ENCODE measurements at regions of chr17 and their contacts with region 1.

Region 1: GRCh38 chr17:80030730-80031410 is 4.8 kb downstream of the TBC1D16 start:
- DNase-seq: peak; percentile 80
- H3K4me3 Mint-ChIP-seq: no peak overlapping the region
- H3K27ac Mint-ChIP-seq: no peak overlapping the region
- H3K4me1 Mint-ChIP-seq: peaks cover 48% of the 10 kb centered on the region
- H3K27me3 Mint-ChIP-seq: no peaks in the 10 kb centered on the region
- CTCF ChIP-seq: no peak

Region 2: GRCh38 chr17:79874329-79874981 is 156.4 kb before region 1 on chr17:
- CTCF ChIA-PET with region 1: no interaction called
- intact Hi-C with region 1: no loop called
- DNase-seq: peak; percentile 55
- H3K4me3 Mint-ChIP-seq: no peak overlapping the region
- H3K27ac Mint-ChIP-seq: no peak overlapping the region
- H3K4me1 Mint-ChIP-seq: no peaks in the 10 kb centered on the region
- H3K27me3 Mint-ChIP-seq: peaks cover 19% of the 10 kb centered on the region
- CTCF ChIP-seq: peak; percentile 20

Region 3: DNA sequence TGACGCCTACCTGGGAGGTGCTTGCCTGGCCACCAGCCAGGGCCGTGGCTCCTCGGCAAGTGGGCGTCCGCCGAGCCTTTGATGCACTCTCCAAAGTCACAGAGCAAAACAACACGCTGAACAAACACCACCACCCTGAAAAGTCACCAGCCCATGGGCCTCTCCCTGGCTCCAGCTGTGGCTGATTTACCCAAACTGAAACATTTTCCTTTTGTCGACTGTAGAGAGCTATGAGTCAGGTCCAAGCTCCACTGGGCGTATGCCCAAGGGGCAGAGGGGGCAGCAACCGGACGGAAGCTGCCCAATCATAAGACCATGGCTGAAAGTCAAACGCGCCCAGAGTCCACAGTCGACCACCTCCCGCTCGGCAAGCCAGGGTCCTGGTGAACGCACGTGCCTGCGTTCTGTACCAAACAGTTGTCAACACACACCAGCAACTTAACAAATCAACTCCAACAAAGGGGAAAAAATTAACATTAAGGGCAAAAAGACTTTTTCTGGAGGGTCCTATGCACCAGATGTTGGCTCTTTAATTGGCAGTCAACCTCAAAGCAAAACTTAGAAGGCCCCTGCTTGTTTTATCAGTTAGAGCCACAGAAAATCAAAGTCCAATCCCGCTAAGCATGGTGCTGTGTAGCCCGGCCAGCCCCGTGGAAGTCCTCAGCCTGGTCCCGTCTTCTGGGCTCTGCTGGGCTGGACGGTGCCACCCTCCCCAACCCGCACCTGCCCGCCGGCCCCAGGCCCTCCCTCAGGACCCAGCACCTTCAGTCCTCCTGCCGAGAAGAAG is 42.5 kb before region 1 on chr17:
- CTCF ChIA-PET with region 1: no interaction called
- intact Hi-C with region 1: no loop called
- DNase-seq: peak; percentile 67
- H3K4me3 Mint-ChIP-seq: peak overlapping the region; percentile 48
- H3K27ac Mint-ChIP-seq: peak overlapping the region; percentile 50
- H3K4me1 Mint-ChIP-seq: peaks cover 81% of the 10 kb centered on the region
- H3K27me3 Mint-ChIP-seq: no peaks in the 10 kb centered on the region
- CTCF ChIP-seq: no peak

Region 4: GRCh38 chr17:80008383-80008840 is 22.5 kb before region 1 on chr17:
- CTCF ChIA-PET with region 1: interaction called, 11 read pairs
- intact Hi-C with region 1: no loop called
- DNase-seq: peak; percentile 91
- H3K4me3 Mint-ChIP-seq: no peak overlapping the region
- H3K27ac Mint-ChIP-seq: peak overlapping the region; percentile 52
- H3K4me1 Mint-ChIP-seq: peaks cover 9% of the 10 kb centered on the region
- H3K27me3 Mint-ChIP-seq: no peaks in the 10 kb centered on the region
- CTCF ChIP-seq: peak; percentile 96

Measured in Calu3 (cell line).